ENCODE measurements at regions of chr16 and their contacts with region 1.

Region 1: GRCh38 chr16:72847187-72848027 is 200.5 kb downstream of the ZFHX3 start:
- DNase-seq: peak in 1 of 2 donors; percentile 68
- H3K4me3 ChIP-seq: peak overlapping the region; percentile 28 to 51
- H3K27ac ChIP-seq: peak overlapping the region; percentile 96 to 98
- H3K4me1 ChIP-seq: peaks cover 23 to 60% of the 10 kb centered on the region in 2 donors
- H3K27me3 ChIP-seq: no peaks in the 10 kb centered on the region
- CTCF ChIP-seq: peak in 2 of 3 experiments; percentile 51 to 58

Region 2: DNA sequence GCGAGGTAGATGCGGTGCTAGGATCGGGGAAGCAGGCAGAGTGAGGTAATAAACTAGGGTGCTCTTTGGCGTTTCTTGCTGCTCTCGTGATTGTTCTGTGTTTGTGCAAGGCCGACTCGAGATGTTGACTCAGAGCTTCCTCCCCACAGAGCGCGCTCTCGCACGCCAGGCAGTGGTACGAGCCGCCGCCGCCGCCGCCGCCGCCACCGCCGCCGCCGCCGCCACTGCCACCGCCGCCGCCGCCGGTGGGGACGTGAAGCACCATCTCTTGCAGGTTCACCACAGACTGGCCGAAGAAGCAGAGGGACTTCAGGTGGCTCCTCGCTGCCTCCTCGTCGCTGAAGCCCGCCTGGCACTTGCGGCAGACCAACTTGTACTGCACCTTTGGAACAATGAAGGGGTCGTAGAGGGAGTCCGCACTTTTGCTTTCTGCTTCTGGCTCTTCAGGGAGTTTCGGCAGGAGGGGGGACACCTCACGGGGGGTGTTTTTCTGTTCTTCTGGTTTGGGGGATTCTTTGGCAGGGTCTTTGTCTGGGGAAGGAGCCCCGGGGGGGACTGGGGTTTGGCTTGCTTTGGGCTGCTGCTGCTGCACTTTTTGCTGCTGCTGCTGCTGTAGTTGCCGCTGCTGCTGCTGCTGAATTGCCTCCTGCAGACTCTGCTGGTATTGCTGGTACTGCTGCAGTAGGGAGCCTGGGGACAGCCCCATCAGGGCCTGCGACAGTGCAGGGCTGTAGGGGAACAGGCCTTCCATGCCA is 59.7 kb before region 1 on chr16:
- intact Hi-C with region 1: loop called (anchors 10 kb)
- DNase-seq: peak; percentile 65 to 90
- H3K4me3 ChIP-seq: peak overlapping the region; percentile 56 to 71
- H3K27ac ChIP-seq: peak overlapping the region; percentile 87
- H3K4me1 ChIP-seq: peaks cover 5 to 12% of the 10 kb centered on the region in 2 donors
- H3K27me3 ChIP-seq: no peaks in the 10 kb centered on the region
- CTCF ChIP-seq: no peak

Region 3: DNA sequence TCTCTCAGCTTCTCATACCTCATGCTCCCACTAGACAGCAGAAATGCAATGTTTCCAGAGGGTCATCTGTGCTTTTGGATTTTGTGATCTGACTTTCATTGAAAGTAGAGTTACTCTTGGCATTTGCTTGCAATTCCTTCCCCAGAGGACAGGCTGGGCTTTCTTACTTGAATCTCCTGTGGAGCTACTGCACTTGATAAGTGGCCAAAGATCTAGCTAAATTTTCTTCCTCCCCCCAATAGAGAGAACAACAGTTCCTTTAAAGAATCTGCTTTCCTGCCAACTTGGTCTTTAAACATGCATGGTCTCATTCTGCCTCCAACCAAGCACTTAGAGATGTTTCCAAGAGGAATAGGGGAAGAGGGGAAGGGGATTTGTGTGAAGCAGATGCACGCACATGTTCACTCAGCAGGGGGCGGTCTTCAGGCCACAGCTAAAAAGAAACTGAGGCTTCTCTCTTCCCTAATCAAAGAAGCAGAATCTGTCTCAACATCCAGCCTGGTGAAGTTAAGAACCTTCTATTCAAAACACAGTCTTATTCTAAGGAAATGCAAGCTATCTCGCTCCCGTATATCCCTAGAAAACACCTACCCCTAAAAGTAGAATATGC is 29.1 kb before region 1 on chr16:
- intact Hi-C with region 1: no loop called
- DNase-seq: no peak
- H3K4me3 ChIP-seq: no peak overlapping the region
- H3K27ac ChIP-seq: no peak overlapping the region
- H3K4me1 ChIP-seq: peaks cover 0 to 19% of the 10 kb centered on the region in 2 donors
- H3K27me3 ChIP-seq: no peaks in the 10 kb centered on the region
- CTCF ChIP-seq: peak in 1 of 3 experiments; percentile 9

Region 4: DNA sequence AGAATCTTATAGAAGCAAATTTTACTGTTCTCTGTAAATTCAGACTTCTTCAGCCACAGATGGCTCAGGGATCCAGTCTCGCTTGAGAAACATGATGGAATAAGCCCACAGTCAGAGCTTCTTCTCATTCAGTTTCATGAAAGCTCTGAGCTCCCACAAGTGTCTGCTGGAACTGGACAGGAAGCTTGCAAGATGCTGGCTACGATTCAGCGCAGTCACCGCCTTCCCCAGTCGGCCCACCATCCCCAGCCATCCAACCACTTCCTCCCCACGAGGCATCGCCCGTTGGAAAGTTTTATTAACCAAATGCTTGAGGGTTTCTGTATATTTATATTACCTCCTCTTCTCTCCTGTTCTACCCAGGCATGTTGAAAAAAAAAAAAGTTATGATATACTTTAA is 28.8 kb after region 1 on chr16:
- intact Hi-C with region 1: loop called (anchors 2 kb)
- DNase-seq: peak in 1 of 2 donors; percentile 83
- H3K4me3 ChIP-seq: no peak overlapping the region
- H3K27ac ChIP-seq: peak overlapping the region; percentile 40 to 71
- H3K4me1 ChIP-seq: peaks cover 0 to 35% of the 10 kb centered on the region in 2 donors
- H3K27me3 ChIP-seq: no peaks in the 10 kb centered on the region
- CTCF ChIP-seq: no peak

Region 5: GRCh38 chr16:72989579-72990551 is 142.5 kb after region 1 on chr16:
- intact Hi-C with region 1: loop called (anchors 2 kb)
- DNase-seq: peak; percentile 74 to 94
- H3K4me3 ChIP-seq: peak overlapping the region; percentile 43 to 55
- H3K27ac ChIP-seq: peak overlapping the region; percentile 92
- H3K4me1 ChIP-seq: peaks cover 24 to 71% of the 10 kb centered on the region in 2 donors
- H3K27me3 ChIP-seq: no peaks in the 10 kb centered on the region
- CTCF ChIP-seq: no peak

Region 6: DNA sequence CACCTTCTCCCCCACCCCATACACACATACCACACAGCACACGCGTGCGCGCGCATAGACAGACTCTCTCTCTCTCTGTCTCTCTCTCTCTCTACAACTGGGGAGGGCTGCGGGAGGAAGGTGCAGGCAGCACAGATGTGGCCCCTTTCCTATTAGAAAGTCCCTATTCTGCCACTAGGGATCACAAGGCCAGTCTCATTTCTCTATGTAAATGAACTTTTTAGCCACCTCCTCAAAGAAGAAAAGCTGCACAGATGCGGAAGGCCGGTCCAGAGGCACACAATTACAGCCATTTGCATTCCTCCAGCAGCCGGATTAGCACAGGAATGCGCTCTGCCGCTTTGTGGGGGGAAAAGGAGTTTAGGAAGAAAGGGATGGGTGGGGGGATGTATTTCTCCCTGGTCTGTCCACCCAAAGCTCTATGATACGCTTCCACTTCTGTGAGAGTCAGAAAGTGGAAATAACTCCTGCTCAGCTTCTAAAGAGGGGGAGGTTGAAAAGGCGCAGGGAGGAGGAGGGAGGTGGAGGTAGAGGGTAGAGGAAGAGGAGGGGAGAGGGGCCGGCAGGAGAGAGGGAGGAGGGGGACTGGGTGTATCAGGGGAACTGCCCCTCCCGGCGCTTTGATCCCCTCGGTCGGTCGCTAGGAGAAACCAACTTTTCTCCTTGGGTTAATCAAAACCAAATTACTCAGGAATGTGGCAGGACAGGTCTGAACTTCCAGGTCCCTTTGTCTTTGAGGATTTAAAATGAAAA is 188.8 kb after region 1 on chr16:
- intact Hi-C with region 1: no loop called
- DNase-seq: no peak
- H3K4me3 ChIP-seq: peak overlapping the region in 1 of 2 donors; percentile 38
- H3K27ac ChIP-seq: peak overlapping the region; percentile 11 to 47
- H3K4me1 ChIP-seq: peaks cover 16 to 55% of the 10 kb centered on the region in 2 donors
- H3K27me3 ChIP-seq: no peaks in the 10 kb centered on the region
- CTCF ChIP-seq: no peak

Region 7: GRCh38 chr16:73068541-73069401 is 221.4 kb after region 1 on chr16:
- intact Hi-C with region 1: loop called (anchors 2 kb)
- DNase-seq: peak; percentile 92 to 97
- H3K4me3 ChIP-seq: peak overlapping the region; percentile 27 to 50
- H3K27ac ChIP-seq: peak overlapping the region; percentile 98 to 99
- H3K4me1 ChIP-seq: peaks cover 23 to 51% of the 10 kb centered on the region in 2 donors
- H3K27me3 ChIP-seq: no peaks in the 10 kb centered on the region
- CTCF ChIP-seq: peak in 1 of 3 experiments; percentile 2

Region 8: DNA sequence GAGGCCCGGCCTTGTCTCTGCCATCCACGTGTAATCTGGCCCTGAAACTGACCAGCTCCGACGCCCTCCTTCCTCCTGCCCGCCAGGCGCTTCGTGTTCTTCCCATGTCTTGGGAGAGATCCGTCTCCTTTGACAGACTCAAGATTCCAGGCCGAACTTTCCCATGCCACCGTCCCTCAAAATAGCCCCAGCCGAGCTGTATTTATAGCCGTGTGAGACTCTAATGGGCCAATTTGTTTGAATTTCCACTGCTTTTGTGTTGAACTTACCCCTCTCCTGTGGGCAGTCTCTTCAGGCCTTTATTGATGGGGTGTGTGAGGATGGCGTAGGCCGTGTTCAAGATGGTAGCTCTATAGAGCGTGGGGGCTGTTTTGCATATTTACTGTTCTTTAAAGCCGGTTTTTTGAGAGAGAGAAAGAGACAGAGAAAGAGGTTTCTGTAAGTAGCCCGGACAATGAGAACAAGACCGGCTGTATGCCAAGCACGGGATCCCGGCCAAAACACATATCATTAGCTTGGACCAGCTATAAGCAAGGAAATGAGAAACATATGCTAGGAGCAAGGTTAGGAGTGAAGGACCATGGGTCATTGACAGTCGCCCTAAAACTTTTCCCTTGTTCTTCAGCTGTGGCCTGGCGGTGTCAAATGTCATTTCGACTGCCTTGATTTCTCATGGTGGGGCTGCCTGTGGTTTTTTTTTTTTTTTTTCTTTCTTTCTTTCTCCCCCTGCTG is 325.0 kb after region 1 on chr16:
- intact Hi-C with region 1: loop called (anchors 2 kb)
- DNase-seq: peak in 1 of 2 donors; percentile 86
- H3K4me3 ChIP-seq: peak overlapping the region in 1 of 2 donors; percentile 23
- H3K27ac ChIP-seq: peak overlapping the region; percentile 91 to 94
- H3K4me1 ChIP-seq: peaks cover 3 to 21% of the 10 kb centered on the region in 2 donors
- H3K27me3 ChIP-seq: no peaks in the 10 kb centered on the region
- CTCF ChIP-seq: peak in 1 of 3 experiments; percentile 29

Measured in ascending aorta (tissue), 2 donors.